ENCODE measurements at regions of chr13 and their contacts with region 1.

Region 1: GRCh38 chr13:42991892-42992763 is at the start of gene EPSTI1:
- DNase-seq: peak; percentile 80
- ATAC-seq: peak; percentile 89
- H3K4me3 Mint-ChIP-seq: peak within 1 kb of the TSS; percentile 90
- H3K27ac Mint-ChIP-seq: peak within 1 kb of the TSS; percentile 99
- H3K4me1 Mint-ChIP-seq: peaks cover 49% of the 10 kb centered on the region
- H3K27me3 Mint-ChIP-seq: no peaks in the 10 kb centered on the region
- total RNA-seq, gene EPSTI1: 84.9 to 95.5 TPM

Region 2: DNA sequence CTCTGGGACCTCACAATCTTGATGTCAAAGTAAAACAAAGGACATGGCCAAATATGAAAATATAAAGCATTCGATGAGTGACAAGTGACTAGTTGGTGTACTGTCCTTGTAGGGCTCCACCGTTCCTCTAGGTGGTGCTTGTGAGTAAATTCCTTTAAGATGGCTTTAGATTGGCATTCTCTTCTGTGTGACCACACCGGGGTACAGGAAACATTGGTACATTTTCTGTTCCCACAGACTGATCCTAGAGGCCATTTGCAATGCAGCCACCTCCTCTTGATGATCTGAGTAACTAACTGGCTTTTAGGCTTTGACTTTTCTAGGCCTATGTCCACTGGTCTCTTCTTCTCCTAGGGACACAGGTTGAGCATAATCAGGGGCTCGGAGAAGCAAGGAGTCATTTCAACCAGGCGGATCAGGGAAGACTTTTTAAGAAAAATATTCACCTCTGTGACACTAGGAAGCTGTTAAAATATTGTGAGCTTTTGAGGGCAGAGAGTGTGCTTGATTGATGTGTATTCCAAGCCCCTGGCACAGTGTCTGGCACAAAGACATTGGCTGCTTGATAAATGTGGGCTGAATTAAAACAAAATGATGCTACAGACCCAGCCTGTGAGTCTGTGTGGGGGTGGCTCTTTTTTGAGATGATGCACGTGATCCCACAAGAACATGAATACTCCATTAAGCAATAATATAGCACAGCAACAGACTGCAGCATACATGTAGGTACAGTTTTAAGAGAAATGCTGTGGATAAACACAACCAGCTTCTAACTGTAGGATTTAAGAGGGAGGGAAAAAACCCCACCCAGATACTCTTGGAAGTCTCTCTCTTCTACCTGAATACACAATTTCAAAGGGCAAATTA is 21.1 kb before region 1 on chr13:
- POLR2A ChIA-PET with region 1: interaction called, 14 read pairs
- DNase-seq: no peak
- ATAC-seq: peak; percentile 76
- H3K4me3 Mint-ChIP-seq: no peak overlapping the region
- H3K27ac Mint-ChIP-seq: peak overlapping the region; percentile 72
- H3K4me1 Mint-ChIP-seq: peaks cover 32% of the 10 kb centered on the region
- H3K27me3 Mint-ChIP-seq: no peaks in the 10 kb centered on the region

Region 3: DNA sequence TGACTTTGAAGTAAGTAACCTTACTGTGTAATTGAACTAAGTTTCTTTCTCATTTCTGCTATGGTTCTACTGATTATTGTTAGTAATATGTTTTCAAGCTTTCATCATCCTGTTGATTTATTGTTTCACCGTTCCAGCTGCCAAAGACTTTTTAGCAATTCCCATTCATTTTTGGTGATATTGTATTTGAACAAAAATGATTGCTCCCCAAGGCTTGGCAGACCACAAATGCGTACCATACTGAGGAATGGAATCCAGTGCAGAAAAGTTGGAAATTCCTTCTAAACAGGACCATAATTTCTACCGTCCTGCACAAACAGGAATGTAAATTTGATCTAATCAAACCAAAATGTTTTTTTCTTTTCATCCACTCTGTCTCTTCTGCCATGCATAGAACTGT is 10.8 kb before region 1 on chr13:
- POLR2A ChIA-PET with region 1: interaction called, 16 read pairs
- DNase-seq: no peak
- ATAC-seq: no peak
- H3K4me3 Mint-ChIP-seq: no peak overlapping the region
- H3K27ac Mint-ChIP-seq: no peak overlapping the region
- H3K4me1 Mint-ChIP-seq: peaks cover 35% of the 10 kb centered on the region
- H3K27me3 Mint-ChIP-seq: no peaks in the 10 kb centered on the region

Region 4: GRCh38 chr13:43023289-43023951 is 31.3 kb after region 1 on chr13 and contains the start of gene DNAJC15:
- POLR2A ChIA-PET with region 1: interaction called, 61 read pairs
- DNase-seq: peak; percentile 89
- ATAC-seq: peak; percentile 94
- H3K4me3 Mint-ChIP-seq: peak within 1 kb of the TSS; percentile 89
- H3K27ac Mint-ChIP-seq: peak within 1 kb of the TSS; percentile 91
- H3K4me1 Mint-ChIP-seq: peaks cover 18% of the 10 kb centered on the region
- H3K27me3 Mint-ChIP-seq: no peaks in the 10 kb centered on the region
- total RNA-seq, gene DNAJC15: 12.5 to 15.7 TPM

Region 5: DNA sequence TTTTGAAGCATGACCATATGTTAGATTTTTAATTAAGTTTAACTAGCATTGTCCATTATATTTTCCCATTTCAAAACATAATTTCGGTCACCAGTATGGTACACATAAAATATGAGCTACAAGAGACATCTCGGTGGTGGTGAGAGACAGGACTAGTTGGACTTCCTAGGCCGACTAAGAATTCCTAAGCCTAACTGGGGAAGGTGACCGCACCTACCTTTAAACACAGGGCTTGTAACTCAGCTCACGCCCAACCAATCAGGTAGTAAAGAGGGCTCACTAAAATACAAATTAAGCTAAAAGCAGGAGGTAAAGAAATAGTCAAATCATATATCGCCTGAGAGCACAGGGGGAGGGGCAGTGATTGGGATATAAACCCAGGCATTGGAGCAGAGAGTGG is 54.1 kb after region 1 on chr13:
- POLR2A ChIA-PET with region 1: interaction called, 13 read pairs
- DNase-seq: no peak
- ATAC-seq: no peak
- H3K4me3 Mint-ChIP-seq: no peak overlapping the region
- H3K27ac Mint-ChIP-seq: no peak overlapping the region
- H3K4me1 Mint-ChIP-seq: peaks cover 26% of the 10 kb centered on the region
- H3K27me3 Mint-ChIP-seq: no peaks in the 10 kb centered on the region

Region 6: DNA sequence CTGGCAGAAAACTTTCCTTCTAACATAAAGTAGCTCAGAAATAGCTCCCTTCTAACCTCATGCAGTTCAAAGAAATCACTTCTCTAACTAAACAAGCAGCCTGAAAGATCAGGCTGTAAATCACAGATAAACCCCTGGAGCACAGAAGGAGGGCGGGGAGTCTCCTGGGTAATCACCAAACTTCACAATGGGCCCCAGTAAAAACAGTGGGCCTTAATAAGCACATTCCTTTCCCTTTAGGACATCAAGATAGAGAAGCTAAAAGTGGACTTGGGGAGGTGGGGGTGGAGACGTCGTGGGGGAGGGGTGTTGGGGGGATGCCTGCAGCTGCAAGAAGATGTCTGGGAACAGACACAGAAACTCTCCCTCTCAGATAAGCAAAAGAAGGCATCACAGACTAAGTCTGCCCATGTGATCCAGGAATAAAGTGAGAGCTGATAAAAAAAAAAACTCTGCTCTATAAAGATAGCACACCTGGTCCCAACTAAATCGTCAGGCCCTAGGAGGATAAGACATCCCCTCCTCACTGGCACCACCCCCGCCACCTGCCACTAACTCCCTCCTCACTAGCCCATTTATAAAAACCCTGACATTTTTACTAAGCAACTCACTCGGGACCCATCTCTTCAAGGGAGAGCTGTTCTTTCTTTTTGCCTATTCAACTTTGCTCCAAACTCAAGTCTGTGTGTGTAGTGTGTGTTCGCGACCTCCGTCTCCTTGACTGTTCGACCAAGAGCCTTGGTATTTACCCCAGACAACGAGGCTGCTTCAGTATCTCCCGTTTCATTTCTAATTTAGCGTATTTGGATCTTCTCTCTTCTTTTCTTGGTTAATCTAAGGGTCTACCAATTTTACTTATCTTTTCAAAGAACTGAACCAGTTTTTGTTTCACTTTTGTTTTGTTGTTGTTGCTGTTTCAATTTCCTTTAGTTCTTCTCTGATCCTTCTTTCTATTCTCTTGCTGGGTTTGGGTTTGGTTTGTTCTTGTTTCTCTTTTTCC is 63.0 kb after region 1 on chr13:
- POLR2A ChIA-PET with region 1: interaction called, 37 read pairs
- DNase-seq: no peak
- ATAC-seq: peak; percentile 45
- H3K4me3 Mint-ChIP-seq: no peak overlapping the region
- H3K27ac Mint-ChIP-seq: no peak overlapping the region
- H3K4me1 Mint-ChIP-seq: peaks cover 27% of the 10 kb centered on the region
- H3K27me3 Mint-ChIP-seq: no peaks in the 10 kb centered on the region

Measured in activated naive CD8-positive, alpha-beta T cell treated with anti-CD3 and anti-CD28 coated beads, Interleukin-2, amount 10 ng/mL, durations not matched to agents 7 days and 5 days (primary cell).